Esophagus squamous epithelium (tissue), 5 donors: ENCODE measurements at regions of chr7 and their contacts with region 1.

Region 1: DNA sequence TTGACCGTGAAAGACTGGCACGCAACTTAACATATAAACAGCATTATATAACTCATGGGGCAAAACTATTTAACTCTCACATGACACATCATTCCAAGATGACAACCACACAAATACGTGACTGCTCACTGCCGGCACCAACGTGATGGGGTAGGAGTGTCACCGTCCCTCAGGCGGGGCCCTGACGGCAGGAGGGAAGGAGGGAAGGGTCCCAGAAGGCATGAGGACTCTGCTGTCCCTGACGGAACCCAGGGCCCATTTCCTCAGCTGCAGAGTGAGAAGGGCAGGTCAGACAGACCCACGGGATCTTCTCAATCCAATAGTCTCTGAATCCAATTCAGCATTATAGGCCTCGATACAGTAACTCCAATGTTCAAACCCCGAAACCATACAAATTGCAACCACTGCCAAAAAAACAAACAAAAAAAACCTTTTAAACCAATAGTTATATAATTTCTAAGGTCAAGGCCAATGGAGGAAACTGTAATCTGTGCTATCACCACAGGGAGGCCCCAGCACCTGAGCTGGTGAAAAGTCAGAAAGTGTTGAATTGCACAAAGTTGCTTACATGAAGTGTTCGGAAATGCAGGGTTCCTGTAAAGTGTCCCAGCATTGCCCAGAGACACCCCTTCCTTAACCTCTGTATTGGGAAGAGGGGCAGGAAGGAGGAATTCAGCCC is 137.4 kb downstream of the TNS3 start:
- DNase-seq: no peak
- H3K4me3 ChIP-seq: no peak overlapping the region
- H3K27ac ChIP-seq: no peak overlapping the region
- H3K4me1 ChIP-seq: no peaks in the 10 kb centered on the region
- H3K27me3 ChIP-seq: no peaks in the 10 kb centered on the region
- CTCF ChIP-seq: peak in 5 of 6 experiments; percentile 31 to 62 (median 42)
- POLR2A ChIP-seq: no peak

Region 2: GRCh38 chr7:47818796-47819606 is 374.5 kb after region 1 on chr7:
- intact Hi-C with region 1: loop called (anchors 10 kb)
- DNase-seq: no peak
- H3K4me3 ChIP-seq: no peak overlapping the region
- H3K27ac ChIP-seq: no peak overlapping the region
- H3K4me1 ChIP-seq: no peaks in the 10 kb centered on the region
- H3K27me3 ChIP-seq: no peaks in the 10 kb centered on the region
- CTCF ChIP-seq: peak; percentile 86 to 94 (median 89)
- POLR2A ChIP-seq: no peak